ENCODE measurements at regions of chr9 and their contacts with region 1.

Region 1: DNA sequence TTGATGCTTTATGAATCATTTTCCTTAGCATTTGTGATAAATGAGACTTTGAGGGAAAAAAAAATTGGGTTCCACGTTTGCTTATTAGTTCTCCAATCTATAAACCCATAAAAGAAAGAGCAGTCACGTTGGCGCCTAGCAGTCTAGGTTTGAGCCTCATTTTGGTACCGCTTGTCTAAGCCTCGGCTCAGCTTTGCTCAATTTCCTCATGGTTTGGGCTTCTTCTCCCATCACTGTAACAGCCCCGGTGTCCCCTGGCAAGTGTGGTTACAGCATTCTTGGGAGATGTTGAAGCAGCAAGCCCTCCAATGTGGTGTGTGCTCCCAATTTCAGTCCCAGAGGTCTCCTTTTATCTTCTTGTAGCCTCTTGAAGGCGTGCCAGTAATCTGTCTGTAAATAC is 578.4 kb downstream of the CDK5RAP2 start:
- DNase-seq: no peak
- ATAC-seq: no peak
- H3K4me3 ChIP-seq: no peak overlapping the region
- H3K27ac ChIP-seq: no peak overlapping the region
- H3K4me1 ChIP-seq: no peaks in the 10 kb centered on the region
- H3K27me3 ChIP-seq: no peaks in the 10 kb centered on the region
- CTCF ChIP-seq: no peak

Region 2: GRCh38 chr9:119544492-119545249 is 456.9 kb before region 1 on chr9:
- intact Hi-C with region 1: no loop called
- DNase-seq: no peak
- ATAC-seq: no peak
- H3K4me3 ChIP-seq: no peak overlapping the region
- H3K27ac ChIP-seq: no peak overlapping the region
- H3K4me1 ChIP-seq: no peaks in the 10 kb centered on the region
- H3K27me3 ChIP-seq: no peaks in the 10 kb centered on the region
- CTCF ChIP-seq: no peak

Region 3: GRCh38 chr9:120032639-120033038 is 31.1 kb after region 1 on chr9:
- intact Hi-C with region 1: loop called in 1 of 2 experiments (anchors 2 kb)
- DNase-seq: no peak
- ATAC-seq: no peak
- H3K4me3 ChIP-seq: no peak overlapping the region
- H3K27ac ChIP-seq: no peak overlapping the region
- H3K4me1 ChIP-seq: no peaks in the 10 kb centered on the region
- H3K27me3 ChIP-seq: no peaks in the 10 kb centered on the region
- CTCF ChIP-seq: no peak

Measured in psoas muscle (tissue), 8 donors.